ENCODE measurements at regions of chr17 and their contacts with region 1.

Region 1: GRCh38 chr17:80426681-80427326 is 11.8 kb downstream of the ENDOV start:
- DNase-seq: peak; percentile 88
- ATAC-seq: peak; percentile 95
- H3K4me3 Mint-ChIP-seq: no peak overlapping the region
- H3K27ac Mint-ChIP-seq: no peak overlapping the region
- H3K4me1 Mint-ChIP-seq: peaks cover 20% of the 10 kb centered on the region
- H3K27me3 Mint-ChIP-seq: no peaks in the 10 kb centered on the region

Region 2: GRCh38 chr17:80364216-80364618 is 62.6 kb before region 1 on chr17:
- CTCF ChIA-PET with region 1: no interaction called
- DNase-seq: no peak
- ATAC-seq: no peak
- H3K4me3 Mint-ChIP-seq: no peak overlapping the region
- H3K27ac Mint-ChIP-seq: peak overlapping the region; percentile 39
- H3K4me1 Mint-ChIP-seq: no peaks in the 10 kb centered on the region
- H3K27me3 Mint-ChIP-seq: no peaks in the 10 kb centered on the region

Region 3: DNA sequence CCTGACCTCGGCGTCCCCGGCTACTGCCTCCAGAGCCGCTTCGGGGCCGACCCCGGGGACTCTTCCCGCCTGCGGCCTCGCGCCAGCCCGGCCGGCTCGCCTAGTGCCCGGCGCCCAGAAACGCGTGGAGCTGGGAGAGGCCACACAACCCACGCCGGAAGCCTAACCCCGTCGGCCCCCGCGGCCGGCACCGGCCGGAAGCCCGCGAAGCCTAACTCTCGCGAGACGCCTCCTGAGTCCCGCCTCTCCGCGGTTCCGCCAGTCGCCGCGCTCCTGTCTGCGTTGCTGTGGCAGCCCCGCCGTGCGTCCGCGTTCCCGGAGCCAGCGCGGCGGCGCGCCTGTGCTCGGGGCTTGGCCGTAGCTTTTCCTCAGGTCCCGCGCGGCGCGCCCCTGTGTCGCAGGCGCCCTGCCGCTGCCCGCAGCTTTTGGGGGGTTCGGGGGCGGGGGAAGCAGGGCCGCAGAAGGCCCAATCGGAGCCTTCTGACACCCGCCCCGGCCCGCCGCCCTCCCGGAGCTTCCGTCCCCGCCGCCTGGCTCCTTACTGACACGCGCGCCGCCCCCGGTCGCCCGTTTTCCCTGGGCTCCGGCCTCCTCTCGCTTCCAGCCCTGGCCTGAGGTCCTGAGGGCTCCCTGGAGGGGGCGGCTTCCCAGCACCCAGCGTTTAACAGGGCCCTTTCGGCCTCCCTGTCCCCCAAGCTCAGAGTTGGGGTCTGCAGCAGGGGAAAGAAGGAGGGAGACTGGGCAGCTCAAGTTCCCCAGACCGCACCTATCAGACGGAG is 27.9 kb after region 1 on chr17:
- CTCF ChIA-PET with region 1: interaction called, 14 read pairs
- DNase-seq: peak; percentile 97
- ATAC-seq: peak; percentile 93
- H3K4me3 Mint-ChIP-seq: peak overlapping the region; percentile 89
- H3K27ac Mint-ChIP-seq: peak overlapping the region; percentile 96
- H3K4me1 Mint-ChIP-seq: peaks cover 40% of the 10 kb centered on the region
- H3K27me3 Mint-ChIP-seq: peaks cover 15% of the 10 kb centered on the region

Region 4: GRCh38 chr17:80486692-80487091 is 59.9 kb after region 1 on chr17:
- CTCF ChIA-PET with region 1: no interaction called
- DNase-seq: no peak
- ATAC-seq: no peak
- H3K4me3 Mint-ChIP-seq: no peak overlapping the region
- H3K27ac Mint-ChIP-seq: no peak overlapping the region
- H3K4me1 Mint-ChIP-seq: no peaks in the 10 kb centered on the region
- H3K27me3 Mint-ChIP-seq: peaks cover 34% of the 10 kb centered on the region

Region 5: GRCh38 chr17:80575057-80575875 is 148.5 kb after region 1 on chr17:
- CTCF ChIA-PET with region 1: interaction called, 25 read pairs
- DNase-seq: peak; percentile 94
- ATAC-seq: peak; percentile 100
- H3K4me3 Mint-ChIP-seq: no peak overlapping the region
- H3K27ac Mint-ChIP-seq: peak overlapping the region; percentile 19
- H3K4me1 Mint-ChIP-seq: peaks cover 8% of the 10 kb centered on the region
- H3K27me3 Mint-ChIP-seq: no peaks in the 10 kb centered on the region

Region 6: DNA sequence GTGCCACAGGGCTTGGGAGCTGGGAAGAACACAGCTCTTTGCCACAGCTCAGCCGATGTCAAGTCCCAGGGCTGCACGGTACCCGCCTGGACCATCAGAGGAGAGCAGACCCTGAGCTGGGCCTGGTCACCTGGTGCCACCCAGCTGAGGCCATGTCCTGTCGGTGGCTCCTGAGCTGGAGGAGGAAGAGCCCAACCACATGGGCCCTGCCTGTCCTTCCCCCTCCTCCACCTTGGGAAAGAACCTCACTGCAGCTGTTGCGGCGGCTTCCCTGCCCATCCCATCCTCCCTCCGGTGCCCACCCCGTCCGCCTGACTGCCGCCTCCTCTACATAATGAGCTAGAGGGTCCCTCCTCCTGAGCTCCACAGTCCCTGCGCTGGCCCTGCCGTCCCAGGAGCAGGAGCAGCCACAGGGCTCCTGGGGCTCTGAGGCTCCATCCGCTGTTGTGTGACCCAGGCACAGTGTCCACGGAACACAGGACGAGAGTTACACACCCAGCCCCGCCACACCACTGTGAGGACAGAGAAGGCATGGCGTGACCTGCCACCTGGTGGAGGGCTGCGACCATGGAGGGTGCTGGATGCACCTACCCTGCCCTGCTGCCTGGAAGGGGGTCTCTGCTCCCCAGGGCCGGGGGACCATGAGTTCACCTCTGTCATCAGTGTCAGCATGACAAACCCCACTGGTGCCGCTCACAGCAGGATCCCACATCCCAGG is 543.4 kb after region 1 on chr17:
- CTCF ChIA-PET with region 1: interaction called, 19 read pairs
- DNase-seq: peak; percentile 80
- ATAC-seq: peak; percentile 78
- H3K4me3 Mint-ChIP-seq: no peak overlapping the region
- H3K27ac Mint-ChIP-seq: peak overlapping the region; percentile 70
- H3K4me1 Mint-ChIP-seq: peaks cover 14% of the 10 kb centered on the region
- H3K27me3 Mint-ChIP-seq: peaks cover 11% of the 10 kb centered on the region

Region 7: GRCh38 chr17:80991645-80992076 is 564.9 kb after region 1 on chr17 and contains the start of gene CHMP6:
- CTCF ChIA-PET with region 1: interaction called, 18 read pairs
- DNase-seq: peak; percentile 74
- ATAC-seq: peak; percentile 71
- H3K4me3 Mint-ChIP-seq: peak within 1 kb of the TSS; percentile 74
- H3K27ac Mint-ChIP-seq: peak within 1 kb of the TSS; percentile 76
- H3K4me1 Mint-ChIP-seq: peaks cover 32% of the 10 kb centered on the region
- H3K27me3 Mint-ChIP-seq: peaks cover 8% of the 10 kb centered on the region
- total RNA-seq, gene CHMP6: 29.8 to 34.6 TPM

Measured in activated CD8-positive, alpha-beta memory T cell treated with anti-CD3 and anti-CD28 coated beads, Interleukin-2, amount 10 ng/mL, durations not matched to agents 7 days and 5 days (primary cell).